MCF 10A (cell line): ENCODE measurements at regions of chr7 and their contacts with region 1.

Region 1: DNA sequence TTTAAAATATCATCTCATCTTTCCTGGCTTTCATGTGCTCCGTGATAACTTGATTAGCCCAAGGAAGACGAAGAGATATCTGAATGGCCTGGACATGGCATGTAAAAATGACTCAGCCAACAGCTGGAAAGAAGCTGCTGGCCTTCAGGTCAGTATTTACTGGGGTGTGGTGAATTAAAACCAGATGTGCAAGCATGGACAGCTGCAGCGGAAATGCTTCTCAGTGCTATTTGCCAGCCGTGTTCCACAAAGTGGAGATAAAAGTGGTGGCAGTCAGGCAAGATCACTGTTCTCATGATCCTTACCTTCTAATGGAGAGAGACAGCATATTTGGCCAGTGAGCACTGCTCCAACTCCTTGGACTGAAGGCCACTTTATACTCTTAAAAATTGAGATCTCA is 203.1 kb upstream of the VSTM2A start:
- DNase-seq: no peak
- H3K4me3 Mint-ChIP-seq: no peak overlapping the region
- H3K27ac Mint-ChIP-seq: no peak overlapping the region
- H3K4me1 Mint-ChIP-seq: no peaks in the 10 kb centered on the region
- H3K27me3 Mint-ChIP-seq: no peaks in the 10 kb centered on the region
- CTCF ChIP-seq: no peak

Region 2: DNA sequence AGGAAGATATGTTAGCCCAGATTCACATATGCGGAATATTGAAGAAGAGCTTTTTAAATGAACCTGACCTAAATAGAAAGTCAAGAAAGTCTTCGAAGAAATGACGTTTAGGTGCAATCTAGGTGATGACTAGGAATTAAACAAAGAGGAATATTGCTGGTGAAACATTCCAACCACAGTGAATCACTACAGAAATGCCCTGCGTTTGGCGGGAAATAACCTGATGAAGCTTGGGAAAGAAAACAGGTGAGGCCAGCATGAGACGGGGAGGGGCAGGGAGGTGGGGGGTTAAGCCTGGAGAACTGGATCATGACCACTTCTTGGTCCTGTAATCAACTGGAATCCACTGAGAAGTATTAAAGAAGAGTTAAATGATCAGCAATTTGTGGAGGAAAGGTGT is 96.3 kb before region 1 on chr7:
- CTCF ChIA-PET with region 1: interaction called, 3 read pairs
- POLR2A ChIA-PET with region 1: no interaction called
- intact Hi-C with region 1: loop called (anchors 10 kb)
- DNase-seq: peak; percentile 4
- H3K4me3 Mint-ChIP-seq: no peak overlapping the region
- H3K27ac Mint-ChIP-seq: no peak overlapping the region
- H3K4me1 Mint-ChIP-seq: no peaks in the 10 kb centered on the region
- H3K27me3 Mint-ChIP-seq: peaks cover 13% of the 10 kb centered on the region
- CTCF ChIP-seq: no peak

Region 3: DNA sequence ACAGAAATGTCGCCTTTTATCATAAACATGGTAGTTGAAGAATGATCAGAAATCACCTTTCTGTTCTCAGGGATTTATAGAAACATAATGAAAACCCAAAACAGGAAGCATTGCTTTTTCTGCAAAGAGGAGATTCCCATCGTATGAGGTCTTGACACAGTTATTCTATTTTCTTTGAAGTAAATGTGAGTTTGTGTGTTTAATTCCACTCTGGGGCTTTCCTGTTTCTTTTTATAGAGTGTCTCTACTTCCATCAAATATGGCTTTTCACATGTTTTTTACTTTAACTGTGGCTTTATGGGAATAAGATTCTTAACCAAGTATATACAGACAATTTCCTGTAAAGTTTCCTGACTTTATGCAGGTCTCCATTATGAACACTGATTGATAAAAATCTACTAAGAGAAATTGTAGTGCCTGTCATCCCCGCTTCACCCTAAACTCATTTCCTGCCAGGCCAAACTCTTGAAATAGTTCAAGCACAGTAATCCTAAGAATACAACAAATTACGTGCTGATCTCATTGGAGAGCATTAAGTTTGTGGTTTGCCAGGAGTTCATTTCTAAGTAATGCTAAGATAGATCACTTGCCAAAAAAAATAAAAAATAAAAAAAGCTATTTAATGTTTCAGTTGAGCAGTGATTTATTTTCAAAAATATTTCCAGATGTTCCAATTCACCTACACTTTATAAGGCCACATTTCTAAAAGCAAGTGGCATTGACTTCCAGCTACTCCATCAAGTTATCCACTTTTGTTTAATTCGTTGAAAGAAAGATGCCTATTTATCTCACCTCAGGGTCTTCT is 472.2 kb after region 1 on chr7:
- CTCF ChIA-PET with region 1: no interaction called
- POLR2A ChIA-PET with region 1: no interaction called
- intact Hi-C with region 1: no loop called
- DNase-seq: peak; percentile 31
- H3K4me3 Mint-ChIP-seq: no peak overlapping the region
- H3K27ac Mint-ChIP-seq: peak overlapping the region; percentile 73
- H3K4me1 Mint-ChIP-seq: peaks cover 37% of the 10 kb centered on the region
- H3K27me3 Mint-ChIP-seq: no peaks in the 10 kb centered on the region
- CTCF ChIP-seq: no peak